ENCODE measurements at regions of chr3 and their contacts with region 1.

Region 1: GRCh38 chr3:49428697-49429100 is 425 bp downstream of the NICN1 start:
- DNase-seq: no peak
- H3K4me3 Mint-ChIP-seq: peak overlapping the region; percentile 90
- H3K27ac Mint-ChIP-seq: peak overlapping the region; percentile 93
- H3K4me1 Mint-ChIP-seq: peaks cover 12% of the 10 kb centered on the region
- H3K27me3 Mint-ChIP-seq: no peaks in the 10 kb centered on the region

Region 2: DNA sequence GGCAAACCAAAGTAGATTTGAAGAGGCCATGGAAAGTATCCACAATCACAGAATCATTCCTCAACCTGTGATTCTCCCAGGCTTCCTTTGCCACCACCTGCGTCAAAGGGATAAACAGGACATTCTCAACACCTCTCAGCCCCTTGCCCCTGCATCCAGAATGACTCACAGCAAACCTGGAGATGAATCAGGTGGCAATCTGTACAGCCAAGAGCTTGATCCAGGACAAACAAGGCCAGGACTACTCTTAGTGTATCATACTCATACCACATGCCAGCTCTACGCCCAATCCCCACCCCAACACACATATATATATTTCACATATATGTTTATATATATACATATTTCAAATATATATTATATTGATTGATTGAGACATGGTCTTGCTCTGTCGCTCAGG is 128.1 kb before region 1 on chr3:
- CTCF ChIA-PET with region 1: no interaction called
- intact Hi-C with region 1: loop called (anchors 1 kb)
- DNase-seq: no peak
- H3K4me3 Mint-ChIP-seq: no peak overlapping the region
- H3K27ac Mint-ChIP-seq: no peak overlapping the region
- H3K4me1 Mint-ChIP-seq: peaks cover 11% of the 10 kb centered on the region
- H3K27me3 Mint-ChIP-seq: no peaks in the 10 kb centered on the region